Aorta (tissue), 5 donors: ENCODE measurements at regions of chr15 and their contacts with region 1.

Region 1: DNA sequence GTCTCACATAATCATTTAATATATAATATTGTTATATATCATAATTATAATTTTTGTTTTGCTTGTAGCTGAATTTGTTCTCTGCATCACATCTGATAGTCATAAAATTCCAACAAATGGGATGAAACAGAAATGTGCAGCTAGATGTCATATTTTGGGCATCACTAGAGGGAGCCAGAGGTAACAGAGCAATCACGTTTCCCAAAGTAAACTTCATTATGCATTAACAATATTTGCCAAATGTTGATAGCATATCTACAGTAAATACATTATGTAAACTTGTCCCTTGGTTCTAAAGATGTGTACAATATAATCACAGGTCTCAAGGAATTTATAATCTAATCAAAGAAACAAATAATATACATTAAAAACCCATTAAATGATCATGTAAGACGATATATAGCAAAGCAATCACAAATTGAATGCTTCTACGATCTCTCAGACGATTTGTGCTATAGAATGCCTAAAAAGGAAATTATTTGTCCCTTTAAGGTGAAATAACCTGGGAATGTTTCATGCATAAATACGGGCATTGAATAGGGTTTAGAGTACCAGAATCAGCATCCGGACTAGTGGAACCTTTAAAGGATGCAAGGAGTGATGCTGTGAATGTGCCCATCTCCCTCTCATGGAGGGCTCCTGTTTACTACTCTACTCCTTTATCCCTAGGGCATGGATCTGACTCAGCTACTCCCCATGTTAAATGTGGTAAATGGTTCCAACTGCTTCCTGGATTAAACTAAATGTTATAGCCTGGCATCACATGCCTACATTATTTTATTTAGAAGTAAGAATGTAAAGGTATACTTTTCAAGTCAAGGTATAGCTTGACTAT is 234.1 kb upstream of the MCTP2 start:
- DNase-seq: no peak
- ATAC-seq: no peak
- H3K4me3 ChIP-seq: no peak overlapping the region
- H3K27ac ChIP-seq: no peak overlapping the region
- H3K4me1 ChIP-seq: no peaks in the 10 kb centered on the region
- H3K27me3 ChIP-seq: no peaks in the 10 kb centered on the region

Region 2: GRCh38 chr15:93929375-93930094 is 67.8 kb before region 1 on chr15:
- intact Hi-C with region 1: loop called in 1 of 2 experiments (anchors 10 kb)
- DNase-seq: peak in 1 of 2 donors; percentile 62
- ATAC-seq: peak; percentile 82
- H3K4me3 ChIP-seq: no peak overlapping the region
- H3K27ac ChIP-seq: no peak overlapping the region
- H3K4me1 ChIP-seq: no peaks in the 10 kb centered on the region
- H3K27me3 ChIP-seq: no peaks in the 10 kb centered on the region

Region 3: DNA sequence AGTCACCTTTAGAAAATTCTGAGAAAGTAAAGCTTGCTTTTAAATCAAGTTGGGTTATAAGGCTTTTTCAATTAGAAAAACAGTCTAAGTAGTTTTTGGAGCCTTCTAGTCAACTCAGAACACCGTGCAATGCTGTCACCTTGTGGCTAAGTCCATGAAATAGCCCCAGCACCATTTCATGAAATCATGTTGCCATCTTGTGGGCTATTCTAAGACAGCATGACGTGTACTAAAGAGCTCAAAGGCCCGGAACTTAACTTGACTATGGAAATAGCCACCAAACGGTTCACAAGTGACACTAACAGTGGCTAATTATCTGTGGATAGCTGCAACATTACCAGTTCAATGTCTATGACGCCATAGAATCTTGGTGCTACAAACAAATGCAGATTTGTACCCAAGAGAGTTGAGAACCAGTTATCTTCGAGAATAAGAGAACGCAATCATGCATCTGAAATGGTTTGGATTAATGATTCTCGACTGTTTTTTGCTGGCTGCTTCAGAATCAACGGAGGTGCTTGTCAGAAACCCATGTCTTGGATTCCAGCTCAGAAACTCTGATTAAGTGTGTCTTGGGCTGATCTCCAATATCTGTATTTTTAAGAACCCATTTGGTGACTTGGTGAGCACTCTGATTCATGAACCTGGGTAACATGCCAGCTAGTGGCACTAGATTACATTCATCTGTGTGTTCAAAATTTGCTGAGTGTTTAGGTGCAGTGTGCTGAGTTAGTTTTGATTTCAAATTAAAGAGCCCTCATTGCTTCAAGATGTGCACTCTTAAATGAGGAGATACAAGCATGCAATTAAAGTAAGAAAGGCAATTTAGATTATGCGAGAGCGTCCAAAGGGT is 122.8 kb after region 1 on chr15:
- intact Hi-C with region 1: loop called in 1 of 2 experiments (anchors 10 kb)
- DNase-seq: peak in 1 of 2 donors; percentile 65
- ATAC-seq: peak; percentile 94
- H3K4me3 ChIP-seq: no peak overlapping the region
- H3K27ac ChIP-seq: no peak overlapping the region
- H3K4me1 ChIP-seq: peaks cover 0 to 3% of the 10 kb centered on the region in 2 donors
- H3K27me3 ChIP-seq: no peaks in the 10 kb centered on the region